MCF 10A (cell line): ENCODE measurements at regions of chr16 and their contacts with region 1.

Region 1: DNA sequence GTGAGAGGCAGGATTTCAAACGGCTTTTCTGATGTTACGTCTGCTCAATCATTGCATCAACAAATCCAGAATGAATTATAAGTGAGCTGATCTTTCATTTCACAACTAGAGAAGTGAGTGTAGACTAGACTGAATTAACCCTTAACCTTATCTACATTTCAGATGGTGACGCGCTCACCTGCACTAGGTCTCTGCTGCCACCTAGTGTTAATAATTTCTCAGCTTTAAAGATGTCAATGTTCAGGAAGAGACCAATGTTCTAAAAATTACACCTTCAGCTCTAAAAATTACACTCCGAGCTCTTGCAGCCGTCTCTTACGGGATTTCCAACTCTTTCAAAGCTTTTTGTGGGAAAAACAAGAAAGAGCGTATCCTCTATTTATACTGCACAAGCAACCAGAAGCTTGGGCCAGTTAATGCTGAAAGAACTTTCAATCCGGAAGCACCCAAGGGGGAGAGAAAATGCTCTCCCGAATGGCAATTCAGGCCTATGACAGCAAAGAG is 88.2 kb upstream of the FA2H start:
- DNase-seq: peak; percentile 68
- H3K4me3 Mint-ChIP-seq: no peak overlapping the region
- H3K27ac Mint-ChIP-seq: no peak overlapping the region
- H3K4me1 Mint-ChIP-seq: peaks cover 7% of the 10 kb centered on the region
- H3K27me3 Mint-ChIP-seq: no peaks in the 10 kb centered on the region
- CTCF ChIP-seq: peak; percentile 92

Region 2: DNA sequence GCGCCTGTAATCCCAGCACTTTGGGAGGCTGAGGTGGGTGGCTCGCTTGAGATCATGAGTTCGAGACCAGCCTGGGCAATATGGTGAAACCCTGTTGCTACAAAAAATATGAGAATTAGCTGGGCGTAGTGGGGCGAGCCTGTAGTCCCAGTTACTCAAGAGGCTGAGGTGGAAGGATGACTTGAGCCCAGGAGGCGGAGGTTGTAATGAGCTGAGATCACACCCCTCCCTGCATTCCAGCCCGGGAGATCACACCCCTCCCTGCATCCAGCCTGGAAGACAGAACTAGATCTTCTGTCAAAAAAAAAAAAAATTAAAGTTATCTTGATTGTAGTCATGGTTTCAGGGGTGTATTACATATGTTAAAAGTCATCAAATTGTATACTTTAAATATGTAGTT is 229.1 kb before region 1 on chr16:
- CTCF ChIA-PET with region 1: interaction called, 10 read pairs
- POLR2A ChIA-PET with region 1: no interaction called
- intact Hi-C with region 1: no loop called
- DNase-seq: no peak
- H3K4me3 Mint-ChIP-seq: no peak overlapping the region
- H3K27ac Mint-ChIP-seq: peak overlapping the region; percentile 49
- H3K4me1 Mint-ChIP-seq: no peaks in the 10 kb centered on the region
- H3K27me3 Mint-ChIP-seq: no peaks in the 10 kb centered on the region
- CTCF ChIP-seq: no peak

Region 3: GRCh38 chr16:74726716-74727115 is 136.1 kb before region 1 on chr16:
- CTCF ChIA-PET with region 1: interaction called, 28 read pairs
- POLR2A ChIA-PET with region 1: no interaction called
- intact Hi-C with region 1: no loop called
- DNase-seq: peak; percentile 51
- H3K4me3 Mint-ChIP-seq: no peak overlapping the region
- H3K27ac Mint-ChIP-seq: no peak overlapping the region
- H3K4me1 Mint-ChIP-seq: peaks cover 12% of the 10 kb centered on the region
- H3K27me3 Mint-ChIP-seq: no peaks in the 10 kb centered on the region
- CTCF ChIP-seq: peak; percentile 54

Region 4: GRCh38 chr16:74760007-74760767 is 102.6 kb before region 1 on chr16:
- CTCF ChIA-PET with region 1: no interaction called
- POLR2A ChIA-PET with region 1: no interaction called
- intact Hi-C with region 1: no loop called
- DNase-seq: no peak
- H3K4me3 Mint-ChIP-seq: no peak overlapping the region
- H3K27ac Mint-ChIP-seq: no peak overlapping the region
- H3K4me1 Mint-ChIP-seq: no peaks in the 10 kb centered on the region
- H3K27me3 Mint-ChIP-seq: peaks cover 11% of the 10 kb centered on the region
- CTCF ChIP-seq: no peak

Region 5: GRCh38 chr16:74793571-74793970 is 69.2 kb before region 1 on chr16:
- CTCF ChIA-PET with region 1: interaction called, 13 read pairs
- POLR2A ChIA-PET with region 1: no interaction called
- intact Hi-C with region 1: no loop called
- DNase-seq: no peak
- H3K4me3 Mint-ChIP-seq: no peak overlapping the region
- H3K27ac Mint-ChIP-seq: no peak overlapping the region
- H3K4me1 Mint-ChIP-seq: no peaks in the 10 kb centered on the region
- H3K27me3 Mint-ChIP-seq: peaks cover 31% of the 10 kb centered on the region
- CTCF ChIP-seq: no peak

Region 6: GRCh38 chr16:74837056-74837455 is 25.7 kb before region 1 on chr16:
- CTCF ChIA-PET with region 1: interaction called, 26 read pairs
- POLR2A ChIA-PET with region 1: interaction called, 7 read pairs
- intact Hi-C with region 1: no loop called
- DNase-seq: no peak
- H3K4me3 Mint-ChIP-seq: no peak overlapping the region
- H3K27ac Mint-ChIP-seq: no peak overlapping the region
- H3K4me1 Mint-ChIP-seq: peaks cover 4% of the 10 kb centered on the region
- H3K27me3 Mint-ChIP-seq: peaks cover 12% of the 10 kb centered on the region
- CTCF ChIP-seq: no peak

Region 7: GRCh38 chr16:74886105-74886855 is 23.5 kb after region 1 on chr16:
- CTCF ChIA-PET with region 1: interaction called, 15 read pairs
- POLR2A ChIA-PET with region 1: no interaction called
- intact Hi-C with region 1: no loop called
- DNase-seq: no peak
- H3K4me3 Mint-ChIP-seq: no peak overlapping the region
- H3K27ac Mint-ChIP-seq: no peak overlapping the region
- H3K4me1 Mint-ChIP-seq: peaks cover 4% of the 10 kb centered on the region
- H3K27me3 Mint-ChIP-seq: no peaks in the 10 kb centered on the region
- CTCF ChIP-seq: no peak